Esophagus muscularis mucosa (tissue), 4 donors: ENCODE measurements at regions of chr1 and their contacts with region 1.

Region 1: DNA sequence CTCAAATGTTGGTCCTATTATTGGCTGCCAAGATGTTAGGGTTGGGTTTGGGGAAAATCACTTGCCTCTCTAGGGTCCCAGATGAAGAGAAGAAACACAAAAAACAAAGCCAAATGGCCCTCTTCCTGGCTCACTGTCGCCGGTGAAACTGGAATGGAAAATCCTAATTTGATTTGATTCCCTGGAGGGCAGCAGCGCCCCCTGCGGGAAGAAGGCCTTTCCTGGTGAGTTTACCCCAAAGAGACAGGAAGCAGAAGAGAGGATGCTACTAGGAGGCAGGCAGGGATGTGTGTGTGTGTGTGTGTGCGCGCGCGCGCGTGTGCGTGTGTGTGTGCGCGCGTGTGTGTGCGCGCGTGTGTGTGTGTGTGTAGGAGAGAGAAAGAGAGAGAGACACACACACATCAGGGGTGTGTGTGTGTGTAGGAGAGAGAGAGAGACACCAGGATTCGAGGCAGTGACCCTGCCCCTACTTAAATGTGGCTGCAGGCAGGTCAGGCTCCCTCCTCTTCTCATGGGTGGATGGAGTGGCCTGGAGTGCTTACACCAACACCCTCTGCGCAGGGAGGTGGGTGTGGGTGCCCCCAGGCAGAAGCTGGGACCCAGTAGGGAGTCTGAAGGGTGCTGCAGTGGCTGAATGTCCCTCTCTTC is 3.1 kb upstream of the SELENON start:
- DNase-seq: peak; percentile 96
- H3K4me3 ChIP-seq: no peak overlapping the region
- H3K27ac ChIP-seq: peak overlapping the region in 3 of 4 donors; percentile 37 to 66 (median 52)
- H3K4me1 ChIP-seq: peaks cover 30 to 49% (median 42%) of the 10 kb centered on the region in 4 donors
- H3K27me3 ChIP-seq: no peaks in the 10 kb centered on the region
- CTCF ChIP-seq: peak; percentile 69 to 83 (median 76)
- EP300 ChIP-seq: no peak
- POLR2A ChIP-seq: no peak

Region 2: GRCh38 chr1:25239681-25240541 is 557.0 kb before region 1 on chr1:
- intact Hi-C with region 1: loop called (anchors 10 kb)
- DNase-seq: peak; percentile 97
- H3K4me3 ChIP-seq: peak overlapping the region; percentile 53 to 62 (median 59)
- H3K27ac ChIP-seq: peak overlapping the region; percentile 89 to 93 (median 89)
- H3K4me1 ChIP-seq: peaks cover 36 to 65% (median 50%) of the 10 kb centered on the region in 4 donors
- H3K27me3 ChIP-seq: no peaks in the 10 kb centered on the region
- CTCF ChIP-seq: peak; percentile 57 to 67 (median 58)
- EP300 ChIP-seq: no peak
- POLR2A ChIP-seq: no peak

Region 3: GRCh38 chr1:25538191-25538761 is 258.7 kb before region 1 on chr1:
- intact Hi-C with region 1: no loop called
- DNase-seq: no peak
- H3K4me3 ChIP-seq: no peak overlapping the region
- H3K27ac ChIP-seq: no peak overlapping the region
- H3K4me1 ChIP-seq: peaks cover 3 to 9% (median 4%) of the 10 kb centered on the region in 4 donors
- H3K27me3 ChIP-seq: no peaks in the 10 kb centered on the region
- CTCF ChIP-seq: no peak
- EP300 ChIP-seq: no peak
- POLR2A ChIP-seq: no peak

Region 4: DNA sequence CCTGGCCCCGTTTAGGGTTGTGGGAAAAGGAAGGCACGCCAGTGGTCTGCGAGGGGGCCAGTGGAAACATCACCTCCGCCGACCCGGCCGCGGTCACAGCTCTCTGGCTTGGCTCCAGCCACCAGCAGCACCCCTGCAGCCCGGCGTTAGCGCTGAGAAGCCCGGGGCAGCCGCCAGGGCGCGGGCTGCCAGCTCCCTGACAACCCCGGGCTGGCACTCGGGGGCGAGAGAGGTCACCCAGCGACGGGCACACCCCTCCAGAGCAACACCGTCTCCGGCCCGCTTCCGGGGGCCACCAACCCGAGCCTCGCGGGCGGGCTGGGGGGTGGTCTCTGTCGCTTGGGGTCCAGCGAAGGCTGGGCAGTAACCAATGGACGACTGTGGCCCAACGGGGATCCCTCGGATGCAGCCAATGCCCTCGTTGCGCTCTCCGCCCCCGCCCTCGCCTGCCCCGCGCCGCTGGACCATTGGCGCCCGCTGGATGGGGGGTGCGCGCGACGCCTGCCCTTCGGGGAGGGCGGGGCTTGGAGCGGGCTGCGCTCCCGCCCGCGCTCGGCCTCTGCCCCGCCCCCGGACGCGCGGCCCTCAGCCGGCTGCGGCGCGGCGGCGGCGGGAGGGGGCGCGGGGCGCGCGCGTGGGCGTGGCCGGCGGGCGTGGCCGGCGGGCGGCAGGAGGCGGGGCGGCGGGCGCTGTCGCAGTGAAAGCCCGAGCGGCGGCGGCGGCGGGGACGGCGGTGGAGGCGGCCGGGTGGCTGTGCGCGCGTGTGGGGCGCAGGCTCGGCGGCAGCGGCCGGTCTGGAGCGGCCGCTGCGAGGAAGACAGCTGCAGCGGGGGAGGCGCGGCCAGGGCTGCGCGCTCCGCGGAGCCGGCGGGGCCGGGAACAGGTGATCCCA is 180.6 kb before region 1 on chr1 and contains the start of gene MAN1C1:
- intact Hi-C with region 1: loop called (anchors 2 kb)
- DNase-seq: peak; percentile 96
- H3K4me3 ChIP-seq: peak within 1 kb of the TSS; percentile 71 to 98 (median 96)
- H3K27ac ChIP-seq: peak within 1 kb of the TSS; percentile 86 to 90 (median 89)
- H3K4me1 ChIP-seq: peaks cover 40 to 54% (median 51%) of the 10 kb centered on the region in 4 donors
- H3K27me3 ChIP-seq: no peaks in the 10 kb centered on the region
- CTCF ChIP-seq: peak; percentile 44 to 66 (median 58)
- EP300 ChIP-seq: no peak
- POLR2A ChIP-seq: no peak
- total RNA-seq, gene MAN1C1: 20.2 to 22.8 (median 20.7) TPM

Region 5: GRCh38 chr1:25695090-25695770 is 101.7 kb before region 1 on chr1:
- intact Hi-C with region 1: loop called (anchors 5 kb)
- DNase-seq: peak; percentile 95
- H3K4me3 ChIP-seq: peak overlapping the region in 1 of 4 donors; percentile 2
- H3K27ac ChIP-seq: peak overlapping the region; percentile 84 to 92 (median 90)
- H3K4me1 ChIP-seq: peaks cover 61 to 81% (median 75%) of the 10 kb centered on the region in 4 donors
- H3K27me3 ChIP-seq: no peaks in the 10 kb centered on the region
- CTCF ChIP-seq: peak; percentile 18 to 34 (median 27)
- EP300 ChIP-seq: peak; percentile 79
- POLR2A ChIP-seq: no peak

Region 6: GRCh38 chr1:25743826-25744581 is 52.9 kb before region 1 on chr1:
- intact Hi-C with region 1: loop called (anchors 5 kb)
- DNase-seq: peak; percentile 93
- H3K4me3 ChIP-seq: no peak overlapping the region
- H3K27ac ChIP-seq: peak overlapping the region; percentile 87 to 94 (median 88)
- H3K4me1 ChIP-seq: peaks cover 29 to 60% (median 45%) of the 10 kb centered on the region in 4 donors
- H3K27me3 ChIP-seq: no peaks in the 10 kb centered on the region
- CTCF ChIP-seq: peak; percentile 65 to 70 (median 65)
- EP300 ChIP-seq: no peak
- POLR2A ChIP-seq: no peak

Region 7: GRCh38 chr1:25867210-25867991 is 70.5 kb after region 1 on chr1:
- intact Hi-C with region 1: no loop called
- DNase-seq: no peak
- H3K4me3 ChIP-seq: no peak overlapping the region
- H3K27ac ChIP-seq: no peak overlapping the region
- H3K4me1 ChIP-seq: peaks cover 11 to 17% (median 15%) of the 10 kb centered on the region in 4 donors
- H3K27me3 ChIP-seq: no peaks in the 10 kb centered on the region
- CTCF ChIP-seq: no peak
- EP300 ChIP-seq: no peak
- POLR2A ChIP-seq: no peak

Region 8: DNA sequence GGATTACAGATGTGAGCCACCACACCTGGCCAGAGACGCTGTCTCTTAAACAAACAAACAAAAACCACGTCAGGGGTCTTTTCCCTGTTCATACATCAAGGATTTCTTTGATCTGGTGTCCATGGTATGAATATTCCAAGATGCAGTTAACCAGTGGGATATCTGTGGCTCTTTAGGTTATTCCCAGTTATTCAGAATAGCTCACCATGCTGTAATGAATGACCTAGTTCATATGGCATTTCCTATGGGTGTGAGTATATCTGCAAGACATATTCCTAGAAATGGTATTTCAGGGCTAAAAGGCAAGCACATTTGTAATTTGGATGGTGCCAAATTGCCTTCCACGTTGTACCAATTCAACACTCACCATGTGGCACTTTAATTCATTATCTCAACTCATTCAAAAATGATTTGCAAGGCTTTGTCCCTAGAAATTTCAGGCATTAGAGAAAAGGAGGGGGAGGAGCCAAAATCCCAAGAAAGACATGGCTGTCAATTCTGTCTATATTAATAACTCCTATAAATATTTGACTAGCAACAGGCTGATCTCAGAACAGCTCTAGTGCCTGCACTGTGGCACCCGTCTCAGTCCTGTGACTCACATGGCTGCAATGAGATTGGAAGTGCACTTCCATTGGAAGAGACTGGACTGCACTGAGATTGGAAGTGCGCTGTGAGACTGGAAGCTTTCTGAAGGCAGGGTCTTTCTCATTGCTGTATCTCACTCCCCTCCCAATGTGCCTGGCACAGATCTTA is 115.3 kb after region 1 on chr1:
- intact Hi-C with region 1: no loop called
- DNase-seq: no peak
- H3K4me3 ChIP-seq: no peak overlapping the region
- H3K27ac ChIP-seq: no peak overlapping the region
- H3K4me1 ChIP-seq: peaks cover 0 to under 1% (median 0%) of the 10 kb centered on the region in 4 donors
- H3K27me3 ChIP-seq: no peaks in the 10 kb centered on the region
- CTCF ChIP-seq: no peak
- EP300 ChIP-seq: no peak
- POLR2A ChIP-seq: no peak